ENCODE measurements at regions of chr10 and their contacts with region 1.

Region 1: DNA sequence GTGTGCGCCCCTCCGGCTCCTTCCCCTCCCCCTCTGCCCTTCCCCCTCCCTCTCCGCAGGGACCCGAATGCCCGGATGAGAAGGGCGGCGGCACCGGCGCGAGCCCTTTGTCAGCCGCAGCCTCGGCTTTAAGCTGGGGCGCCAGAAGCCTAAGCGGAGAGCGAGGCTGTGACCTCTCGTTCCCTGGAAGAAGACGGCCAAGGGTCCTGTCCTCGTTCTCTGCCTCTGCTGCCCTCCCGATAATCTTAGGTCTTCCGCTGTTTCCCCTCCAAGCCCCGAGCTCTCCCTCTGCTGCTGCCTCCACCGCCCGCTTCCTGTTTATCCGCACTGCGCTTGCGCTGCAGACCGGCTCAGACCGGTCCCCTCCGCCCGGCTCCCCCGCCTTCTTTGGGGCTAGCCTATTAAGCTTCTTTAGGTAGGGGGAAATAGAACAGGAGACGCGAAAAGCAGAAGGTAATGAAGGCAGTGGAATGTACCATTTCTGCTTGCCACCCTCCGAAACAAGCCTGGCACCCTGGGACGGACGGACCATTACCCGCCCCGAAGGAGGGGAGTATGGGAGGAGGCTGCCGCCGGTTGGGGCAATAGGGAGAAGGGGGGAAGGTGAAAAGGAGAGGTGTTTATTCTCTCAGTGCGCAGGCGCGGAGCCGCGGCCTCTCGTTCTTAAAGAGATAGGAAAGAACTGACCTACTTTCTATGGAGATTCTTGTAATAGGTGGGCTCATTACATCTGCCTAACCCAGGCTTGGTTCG is at the start of gene OGA:
- DNase-seq: peak; percentile 99
- ATAC-seq: peak; percentile 90
- H3K4me3 Mint-ChIP-seq: peak within 1 kb of the TSS; percentile 88
- H3K27ac Mint-ChIP-seq: peak within 1 kb of the TSS; percentile 96
- H3K4me1 Mint-ChIP-seq: peaks cover 34% of the 10 kb centered on the region
- H3K27me3 Mint-ChIP-seq: no peaks in the 10 kb centered on the region
- CTCF ChIP-seq: no peak
- total RNA-seq, gene OGA: 125 to 130 TPM

Region 2: GRCh38 chr10:101710059-101710695 is 108.1 kb before region 1 on chr10:
- CTCF ChIA-PET with region 1: no interaction called
- POLR2A ChIA-PET with region 1: no interaction called
- intact Hi-C with region 1: no loop called
- DNase-seq: no peak
- ATAC-seq: no peak
- H3K4me3 Mint-ChIP-seq: no peak overlapping the region
- H3K27ac Mint-ChIP-seq: no peak overlapping the region
- H3K4me1 Mint-ChIP-seq: peaks cover 6% of the 10 kb centered on the region
- H3K27me3 Mint-ChIP-seq: peaks cover 46% of the 10 kb centered on the region
- CTCF ChIP-seq: no peak

Region 3: DNA sequence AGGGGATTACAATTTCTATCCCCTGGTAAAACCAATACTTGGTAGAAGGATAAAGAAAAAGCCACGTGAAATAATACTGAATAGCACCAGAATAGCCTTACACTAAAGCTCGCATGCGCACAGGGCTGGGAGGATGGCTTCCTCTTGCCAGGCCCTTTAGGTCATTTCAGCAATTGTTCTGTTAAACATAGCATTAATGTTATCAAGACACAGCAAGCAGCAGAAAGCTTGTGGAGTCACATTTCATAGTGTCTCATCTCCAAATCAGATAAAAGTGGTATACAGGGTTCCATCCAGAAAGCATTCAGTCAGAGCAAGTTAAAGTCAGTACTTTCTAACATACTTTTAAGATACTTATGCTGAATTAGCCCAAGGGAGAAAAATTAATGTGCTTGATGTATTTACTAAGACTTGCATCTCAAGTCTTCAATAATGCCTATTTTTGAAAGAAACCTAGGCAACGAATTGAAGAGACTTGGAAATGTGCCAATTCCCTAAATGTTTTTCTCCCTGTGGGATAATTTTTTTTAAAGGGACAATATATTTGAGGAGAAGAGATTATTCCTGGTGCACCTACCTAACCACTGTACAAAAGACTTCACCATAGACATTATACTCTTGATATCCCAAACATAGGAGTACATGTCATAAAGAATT is 20.8 kb before region 1 on chr10:
- CTCF ChIA-PET with region 1: no interaction called
- POLR2A ChIA-PET with region 1: interaction called, 15 read pairs
- intact Hi-C with region 1: no loop called
- DNase-seq: no peak
- ATAC-seq: no peak
- H3K4me3 Mint-ChIP-seq: no peak overlapping the region
- H3K27ac Mint-ChIP-seq: peak overlapping the region; percentile 67
- H3K4me1 Mint-ChIP-seq: peaks cover 25% of the 10 kb centered on the region
- H3K27me3 Mint-ChIP-seq: no peaks in the 10 kb centered on the region
- CTCF ChIP-seq: no peak

Region 4: GRCh38 chr10:101807158-101807557 is 11.1 kb before region 1 on chr10:
- CTCF ChIA-PET with region 1: no interaction called
- POLR2A ChIA-PET with region 1: interaction called, 13 read pairs
- intact Hi-C with region 1: no loop called
- DNase-seq: no peak
- ATAC-seq: no peak
- H3K4me3 Mint-ChIP-seq: no peak overlapping the region
- H3K27ac Mint-ChIP-seq: peak overlapping the region; percentile 52
- H3K4me1 Mint-ChIP-seq: peaks cover 34% of the 10 kb centered on the region
- H3K27me3 Mint-ChIP-seq: no peaks in the 10 kb centered on the region
- CTCF ChIP-seq: no peak

Region 5: GRCh38 chr10:101830322-101831168 is 12.2 kb after region 1 on chr10:
- CTCF ChIA-PET with region 1: interaction called, 125 read pairs
- POLR2A ChIA-PET with region 1: interaction called, 28 read pairs
- intact Hi-C with region 1: no loop called
- DNase-seq: peak; percentile 94
- ATAC-seq: peak; percentile 72
- H3K4me3 Mint-ChIP-seq: peak overlapping the region; percentile 70
- H3K27ac Mint-ChIP-seq: peak overlapping the region; percentile 94
- H3K4me1 Mint-ChIP-seq: peaks cover 43% of the 10 kb centered on the region
- H3K27me3 Mint-ChIP-seq: no peaks in the 10 kb centered on the region
- CTCF ChIP-seq: no peak

Region 6: GRCh38 chr10:101959349-101959916 is 141.1 kb after region 1 on chr10:
- CTCF ChIA-PET with region 1: no interaction called
- POLR2A ChIA-PET with region 1: no interaction called
- intact Hi-C with region 1: no loop called
- DNase-seq: no peak
- ATAC-seq: no peak
- H3K4me3 Mint-ChIP-seq: no peak overlapping the region
- H3K27ac Mint-ChIP-seq: peak overlapping the region; percentile 20
- H3K4me1 Mint-ChIP-seq: no peaks in the 10 kb centered on the region
- H3K27me3 Mint-ChIP-seq: no peaks in the 10 kb centered on the region
- CTCF ChIP-seq: no peak

Measured in activated CD8-positive, alpha-beta T cell treated with anti-CD3 and anti-CD28 coated beads for 36 hours (primary cell).